Activated T-helper 2 cell treated with anti-CD3 and anti-CD28 coated beads, Interferon-gamma antibody, Interleukin-2, Interleukin-4, amounts not matched to agents 10 μg/mL and 5 μg/mL and 100 μg/mL, durations not matched to agents 14 hours and 24 hours and 36 hours (primary cell): ENCODE measurements at regions of chr3 and their contacts with region 1.

Region 1: GRCh38 chr3:49339945-49340800 is at the start of gene USP4:
- DNase-seq: peak; percentile 91
- H3K4me3 Mint-ChIP-seq: peak within 1 kb of the TSS; percentile 95
- H3K27ac Mint-ChIP-seq: peak within 1 kb of the TSS; percentile 96
- H3K4me1 Mint-ChIP-seq: peaks cover 36% of the 10 kb centered on the region
- H3K27me3 Mint-ChIP-seq: no peaks in the 10 kb centered on the region
- total RNA-seq, gene USP4: 78.6 and 82.7 TPM in 2 replicates

Region 2: GRCh38 chr3:49165771-49166751 is 174.1 kb before region 1 on chr3 and contains the start of gene CCDC71:
- intact Hi-C with region 1: loop called (anchors 5 kb)
- DNase-seq: peak; percentile 72
- H3K4me3 Mint-ChIP-seq: peak within 1 kb of the TSS; percentile 93
- H3K27ac Mint-ChIP-seq: peak within 1 kb of the TSS; percentile 85
- H3K4me1 Mint-ChIP-seq: peaks cover 24% of the 10 kb centered on the region
- H3K27me3 Mint-ChIP-seq: no peaks in the 10 kb centered on the region
- total RNA-seq, gene CCDC71: 24.4 and 24.9 TPM in 2 replicates

Region 3: DNA sequence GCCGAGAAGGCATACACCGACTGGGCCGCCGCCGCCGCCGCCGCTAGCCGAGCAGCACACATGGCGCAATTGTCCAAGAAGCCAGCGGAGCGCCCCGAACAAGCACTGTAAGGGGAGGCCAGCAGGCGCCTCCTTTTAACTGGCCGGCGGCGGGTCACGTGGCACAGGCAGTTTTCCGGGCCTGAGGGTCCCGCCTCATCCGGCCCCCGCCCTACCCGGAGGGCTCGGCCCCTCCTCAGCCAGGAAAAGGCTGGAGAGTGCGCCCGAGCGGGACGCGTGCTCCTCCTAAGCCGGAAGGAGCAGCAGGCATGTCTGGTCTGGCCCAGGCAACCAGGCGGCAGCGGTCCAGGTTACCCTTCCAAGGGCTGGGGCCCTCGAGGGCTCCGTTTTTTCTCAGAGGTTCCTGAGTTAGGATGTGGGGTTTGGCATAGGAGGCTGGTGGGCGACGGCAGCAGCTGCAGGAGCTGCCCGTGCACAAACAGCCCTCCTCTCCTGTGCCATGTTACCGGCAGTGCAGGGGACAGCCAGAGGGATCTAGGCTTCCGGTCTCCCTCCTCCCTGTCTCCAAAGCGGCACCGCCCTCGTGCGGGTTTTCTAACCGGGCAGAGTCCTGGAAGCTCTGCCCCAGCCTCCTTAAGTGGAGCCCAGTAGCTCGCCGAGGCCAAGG is 18.2 kb after region 1 on chr3 and contains the start of gene GPX1:
- intact Hi-C with region 1: loop called (anchors 1 kb)
- DNase-seq: peak; percentile 82
- H3K4me3 Mint-ChIP-seq: peak within 1 kb of the TSS; percentile 97
- H3K27ac Mint-ChIP-seq: peak within 1 kb of the TSS; percentile 88
- H3K4me1 Mint-ChIP-seq: peaks cover 17% of the 10 kb centered on the region
- H3K27me3 Mint-ChIP-seq: no peaks in the 10 kb centered on the region
- total RNA-seq, gene GPX1: 168 and 173 TPM in 2 replicates

Region 4: GRCh38 chr3:49387721-49388120 is 47.5 kb after region 1 on chr3:
- intact Hi-C with region 1: no loop called
- DNase-seq: no peak
- H3K4me3 Mint-ChIP-seq: no peak overlapping the region
- H3K27ac Mint-ChIP-seq: no peak overlapping the region
- H3K4me1 Mint-ChIP-seq: peaks cover 13% of the 10 kb centered on the region
- H3K27me3 Mint-ChIP-seq: no peaks in the 10 kb centered on the region

Region 5: DNA sequence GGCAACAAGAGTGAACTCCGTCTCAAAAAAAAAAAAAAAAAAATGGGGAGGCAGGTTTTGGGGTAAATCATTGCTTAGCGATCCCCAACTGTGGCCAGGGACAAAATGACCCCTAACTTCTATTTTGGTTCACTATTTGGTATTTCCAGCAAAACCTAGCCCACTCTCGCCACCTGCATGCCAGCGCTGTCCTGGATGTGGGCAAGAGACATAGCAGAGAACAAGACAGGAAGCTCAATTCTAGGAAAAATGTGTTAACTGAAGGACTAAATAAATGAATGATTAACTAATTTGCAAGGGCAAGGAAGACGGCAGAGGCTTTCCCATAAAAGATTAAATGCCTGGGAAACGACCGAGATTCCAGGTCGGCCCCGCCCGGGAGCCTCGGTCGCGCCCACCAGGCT is 88.5 kb after region 1 on chr3:
- intact Hi-C with region 1: loop called (anchors 5 kb)
- DNase-seq: no peak
- H3K4me3 Mint-ChIP-seq: peak overlapping the region; percentile 94
- H3K27ac Mint-ChIP-seq: peak overlapping the region; percentile 93
- H3K4me1 Mint-ChIP-seq: peaks cover 14% of the 10 kb centered on the region
- H3K27me3 Mint-ChIP-seq: no peaks in the 10 kb centered on the region